B cell (primary cell): ENCODE measurements at regions of chr13 and their contacts with region 1.

Region 1: GRCh38 chr13:102580552-102581169 is 16.1 kb upstream of the TPP2 start:
- DNase-seq: peak; percentile 74
- ATAC-seq: peak; percentile 58
- H3K4me3 ChIP-seq: no peak overlapping the region
- H3K4me3 Mint-ChIP-seq: no peak overlapping the region
- H3K27ac ChIP-seq: no peak overlapping the region
- H3K27ac Mint-ChIP-seq: no peak overlapping the region
- H3K4me1 ChIP-seq: peaks cover 4 to 5% of the 10 kb centered on the region in 2 donors
- H3K4me1 Mint-ChIP-seq: peaks cover 8% of the 10 kb centered on the region
- H3K27me3 ChIP-seq: no peaks in the 10 kb centered on the region
- H3K27me3 Mint-ChIP-seq: peaks cover 6% of the 10 kb centered on the region
- CTCF ChIP-seq: peak; percentile 95

Region 2: GRCh38 chr13:102376318-102376717 is 204.3 kb before region 1 on chr13:
- CTCF ChIA-PET with region 1: no interaction called
- POLR2A ChIA-PET with region 1: no interaction called
- intact Hi-C with region 1: no loop called
- DNase-seq: no peak
- ATAC-seq: no peak
- H3K4me3 ChIP-seq: no peak overlapping the region
- H3K4me3 Mint-ChIP-seq: no peak overlapping the region
- H3K27ac ChIP-seq: no peak overlapping the region
- H3K27ac Mint-ChIP-seq: no peak overlapping the region
- H3K4me1 ChIP-seq: no peaks in the 10 kb centered on the region
- H3K4me1 Mint-ChIP-seq: no peaks in the 10 kb centered on the region
- H3K27me3 ChIP-seq: no peaks in the 10 kb centered on the region
- H3K27me3 Mint-ChIP-seq: peaks cover 3% of the 10 kb centered on the region
- CTCF ChIP-seq: no peak

Region 3: GRCh38 chr13:102596147-102597028 is 15.7 kb after region 1 on chr13 and contains the start of gene TPP2:
- CTCF ChIA-PET with region 1: interaction called, 15 read pairs
- POLR2A ChIA-PET with region 1: interaction called, 3 read pairs
- intact Hi-C with region 1: loop called (anchors 2 kb)
- DNase-seq: peak; percentile 97
- ATAC-seq: peak; percentile 89
- H3K4me3 ChIP-seq: peak within 1 kb of the TSS; percentile 83 to 99 (median 91)
- H3K4me3 Mint-ChIP-seq: peak within 1 kb of the TSS; percentile 100
- H3K27ac ChIP-seq: peak within 1 kb of the TSS; percentile 97 to 100
- H3K27ac Mint-ChIP-seq: peak within 1 kb of the TSS; percentile 100
- H3K4me1 ChIP-seq: peaks cover 24 to 26% of the 10 kb centered on the region in 2 donors
- H3K4me1 Mint-ChIP-seq: peaks cover 63% of the 10 kb centered on the region
- H3K27me3 ChIP-seq: no peaks in the 10 kb centered on the region
- H3K27me3 Mint-ChIP-seq: no peaks in the 10 kb centered on the region
- CTCF ChIP-seq: no peak
- total RNA-seq, gene TPP2: 51.1 and 56.6 TPM in 2 replicates

Region 4: GRCh38 chr13:102657630-102658029 is 77.0 kb after region 1 on chr13:
- CTCF ChIA-PET with region 1: interaction called, 5 read pairs
- POLR2A ChIA-PET with region 1: no interaction called
- intact Hi-C with region 1: loop called (anchors 1 kb)
- DNase-seq: no peak
- ATAC-seq: no peak
- H3K4me3 ChIP-seq: no peak overlapping the region
- H3K4me3 Mint-ChIP-seq: no peak overlapping the region
- H3K27ac ChIP-seq: no peak overlapping the region
- H3K27ac Mint-ChIP-seq: no peak overlapping the region
- H3K4me1 ChIP-seq: no peaks in the 10 kb centered on the region
- H3K4me1 Mint-ChIP-seq: no peaks in the 10 kb centered on the region
- H3K27me3 ChIP-seq: no peaks in the 10 kb centered on the region
- H3K27me3 Mint-ChIP-seq: no peaks in the 10 kb centered on the region
- CTCF ChIP-seq: peak; percentile 49

Region 5: GRCh38 chr13:102800145-102801041 is 219.7 kb after region 1 on chr13:
- CTCF ChIA-PET with region 1: interaction called, 11 read pairs
- POLR2A ChIA-PET with region 1: no interaction called
- intact Hi-C with region 1: loop called (anchors 1 kb)
- DNase-seq: peak; percentile 84
- ATAC-seq: peak; percentile 90
- H3K4me3 ChIP-seq: peak overlapping the region; percentile 45 to 68 (median 53)
- H3K4me3 Mint-ChIP-seq: peak overlapping the region; percentile 84
- H3K27ac ChIP-seq: peak overlapping the region in 1 of 2 donors; percentile 49
- H3K27ac Mint-ChIP-seq: peak overlapping the region; percentile 32
- H3K4me1 ChIP-seq: peaks cover 24% of the 10 kb centered on the region in 2 donors
- H3K4me1 Mint-ChIP-seq: peaks cover 28% of the 10 kb centered on the region
- H3K27me3 ChIP-seq: peaks cover 0 to 18% (median 11%) of the 10 kb centered on the region in 4 experiments
- H3K27me3 Mint-ChIP-seq: peaks cover 8% of the 10 kb centered on the region
- CTCF ChIP-seq: peak; percentile 66

Region 6: GRCh38 chr13:102870677-102871415 is 290.2 kb after region 1 on chr13:
- CTCF ChIA-PET with region 1: interaction called, 10 read pairs
- POLR2A ChIA-PET with region 1: no interaction called
- intact Hi-C with region 1: no loop called
- DNase-seq: peak; percentile 61
- ATAC-seq: peak; percentile 66
- H3K4me3 ChIP-seq: no peak overlapping the region
- H3K4me3 Mint-ChIP-seq: no peak overlapping the region
- H3K27ac ChIP-seq: no peak overlapping the region
- H3K27ac Mint-ChIP-seq: peak overlapping the region; percentile 74
- H3K4me1 ChIP-seq: peaks cover 0 to 4% of the 10 kb centered on the region in 2 donors
- H3K4me1 Mint-ChIP-seq: peaks cover 7% of the 10 kb centered on the region
- H3K27me3 ChIP-seq: no peaks in the 10 kb centered on the region
- H3K27me3 Mint-ChIP-seq: no peaks in the 10 kb centered on the region
- CTCF ChIP-seq: peak; percentile 82